Activated CD4-positive, alpha-beta memory T cell treated with anti-CD3 and anti-CD28 coated beads, Interleukin-2, amount 10 ng/mL, durations not matched to agents 7 days and 5 days (primary cell): ENCODE measurements at regions of chr2 and their contacts with region 1.

Region 1: DNA sequence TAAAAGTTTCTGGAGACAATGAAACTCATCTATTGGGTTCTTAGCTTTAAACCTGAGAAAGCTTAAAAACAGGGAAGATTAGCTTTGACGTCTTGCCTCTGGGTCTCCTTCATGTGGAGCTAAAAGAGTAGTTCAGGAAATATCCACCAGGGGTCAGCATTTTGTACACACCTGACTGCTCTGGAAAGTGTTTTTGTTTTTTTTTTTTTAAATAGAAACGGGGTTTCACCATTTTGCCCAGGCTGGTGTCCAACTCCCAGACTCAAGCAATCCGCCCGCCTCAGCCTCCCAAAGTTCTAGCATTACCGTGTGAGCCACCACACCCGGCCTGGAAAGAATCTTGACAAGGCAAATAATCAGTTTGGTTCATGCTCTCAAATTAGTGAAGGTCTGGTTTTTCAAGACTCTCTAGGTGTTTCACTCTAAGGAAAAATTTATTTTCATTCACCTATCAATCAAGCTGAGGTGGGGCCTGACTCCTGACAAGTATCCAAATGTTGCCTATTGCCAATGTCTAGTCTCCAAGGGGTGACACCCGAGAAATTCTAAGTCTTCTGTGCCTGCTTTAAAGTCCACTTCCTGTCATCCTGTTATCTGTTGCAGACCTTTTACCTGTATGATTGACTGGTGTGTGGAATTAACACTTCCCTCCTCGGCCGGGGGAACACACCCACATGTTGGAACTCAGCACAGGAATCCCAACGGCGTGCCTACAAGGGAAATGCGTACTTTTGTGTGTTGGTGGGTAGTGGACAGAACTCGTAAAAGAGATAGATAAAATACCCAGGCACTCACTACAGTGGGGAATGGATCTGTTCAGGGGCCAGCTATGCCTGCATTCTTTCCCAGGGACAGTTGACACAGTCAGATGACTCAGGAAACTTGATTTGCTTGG is 11.3 kb downstream of the IL1RN start:
- DNase-seq: peak; percentile 52
- H3K4me3 Mint-ChIP-seq: peak overlapping the region; percentile 25
- H3K27ac Mint-ChIP-seq: no peak overlapping the region
- H3K4me1 Mint-ChIP-seq: peaks cover 30% of the 10 kb centered on the region
- H3K27me3 Mint-ChIP-seq: no peaks in the 10 kb centered on the region

Region 2: DNA sequence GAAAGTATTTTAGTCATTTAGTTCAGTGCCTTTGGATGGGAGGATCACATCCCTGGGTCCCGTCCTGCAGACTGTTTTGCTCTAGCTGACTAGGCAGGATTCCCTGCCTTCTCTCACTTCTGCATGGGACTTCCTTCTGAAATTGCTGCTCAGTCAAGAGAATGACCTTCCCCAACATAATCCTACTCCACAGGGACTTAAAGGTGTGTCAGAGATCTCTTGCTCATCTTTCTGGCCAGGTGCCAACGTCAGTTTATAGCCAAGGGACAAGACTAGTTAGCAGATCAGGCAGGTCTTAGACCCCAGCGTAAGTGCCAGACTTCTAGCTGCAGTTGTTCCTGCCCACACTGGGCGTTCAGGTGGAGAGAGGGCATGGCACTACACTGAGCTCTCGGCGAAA is 292.6 kb before region 1 on chr2:
- CTCF ChIA-PET with region 1: no interaction called
- POLR2A ChIA-PET with region 1: no interaction called
- DNase-seq: no peak
- H3K4me3 Mint-ChIP-seq: no peak overlapping the region
- H3K27ac Mint-ChIP-seq: no peak overlapping the region
- H3K4me1 Mint-ChIP-seq: peaks cover 3% of the 10 kb centered on the region
- H3K27me3 Mint-ChIP-seq: peaks cover 23% of the 10 kb centered on the region

Region 3: GRCh38 chr2:112891385-112891831 is 247.3 kb before region 1 on chr2:
- CTCF ChIA-PET with region 1: no interaction called
- POLR2A ChIA-PET with region 1: no interaction called
- DNase-seq: no peak
- H3K4me3 Mint-ChIP-seq: no peak overlapping the region
- H3K27ac Mint-ChIP-seq: no peak overlapping the region
- H3K4me1 Mint-ChIP-seq: no peaks in the 10 kb centered on the region
- H3K27me3 Mint-ChIP-seq: peaks cover 4% of the 10 kb centered on the region

Region 4: DNA sequence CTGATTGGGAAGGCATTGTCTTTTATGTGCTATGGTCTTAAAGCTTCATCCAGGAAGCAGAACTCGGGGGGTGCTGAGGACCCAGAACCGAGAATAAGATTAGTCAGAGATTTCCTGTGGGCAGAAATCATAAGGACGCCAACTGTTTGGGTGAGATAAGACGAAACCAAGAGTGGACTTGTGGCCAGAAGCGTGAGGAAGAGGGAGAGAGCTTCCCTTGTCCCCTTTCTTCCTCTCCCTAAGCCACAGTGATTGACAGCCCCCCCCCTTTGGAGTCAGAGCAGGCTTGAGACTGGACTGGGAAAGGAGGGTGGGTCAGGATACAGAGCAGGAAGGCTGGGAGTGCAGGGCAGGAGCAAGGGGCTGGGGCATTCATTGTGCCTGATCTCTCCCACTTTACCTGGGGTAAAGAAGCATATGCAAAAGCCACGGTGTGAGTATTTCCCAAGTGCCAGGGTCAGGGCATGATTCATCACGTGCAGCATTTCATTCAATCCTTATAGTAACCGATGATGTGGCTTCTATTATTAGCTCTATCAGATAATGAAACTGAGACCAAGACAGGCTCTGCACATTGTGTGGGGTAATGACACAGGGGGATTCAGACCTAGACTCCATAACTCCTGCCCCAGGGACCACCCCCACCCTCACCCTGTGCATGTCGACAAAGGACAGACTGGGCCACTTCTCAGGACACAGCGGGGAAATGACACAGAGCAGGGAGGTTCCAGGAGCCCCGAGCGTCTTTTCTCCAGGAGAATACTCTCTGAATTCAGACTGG is 14.3 kb before region 1 on chr2:
- CTCF ChIA-PET with region 1: interaction called, 33 read pairs
- POLR2A ChIA-PET with region 1: no interaction called
- DNase-seq: no peak
- H3K4me3 Mint-ChIP-seq: no peak overlapping the region
- H3K27ac Mint-ChIP-seq: no peak overlapping the region
- H3K4me1 Mint-ChIP-seq: peaks cover 47% of the 10 kb centered on the region
- H3K27me3 Mint-ChIP-seq: no peaks in the 10 kb centered on the region

Region 5: DNA sequence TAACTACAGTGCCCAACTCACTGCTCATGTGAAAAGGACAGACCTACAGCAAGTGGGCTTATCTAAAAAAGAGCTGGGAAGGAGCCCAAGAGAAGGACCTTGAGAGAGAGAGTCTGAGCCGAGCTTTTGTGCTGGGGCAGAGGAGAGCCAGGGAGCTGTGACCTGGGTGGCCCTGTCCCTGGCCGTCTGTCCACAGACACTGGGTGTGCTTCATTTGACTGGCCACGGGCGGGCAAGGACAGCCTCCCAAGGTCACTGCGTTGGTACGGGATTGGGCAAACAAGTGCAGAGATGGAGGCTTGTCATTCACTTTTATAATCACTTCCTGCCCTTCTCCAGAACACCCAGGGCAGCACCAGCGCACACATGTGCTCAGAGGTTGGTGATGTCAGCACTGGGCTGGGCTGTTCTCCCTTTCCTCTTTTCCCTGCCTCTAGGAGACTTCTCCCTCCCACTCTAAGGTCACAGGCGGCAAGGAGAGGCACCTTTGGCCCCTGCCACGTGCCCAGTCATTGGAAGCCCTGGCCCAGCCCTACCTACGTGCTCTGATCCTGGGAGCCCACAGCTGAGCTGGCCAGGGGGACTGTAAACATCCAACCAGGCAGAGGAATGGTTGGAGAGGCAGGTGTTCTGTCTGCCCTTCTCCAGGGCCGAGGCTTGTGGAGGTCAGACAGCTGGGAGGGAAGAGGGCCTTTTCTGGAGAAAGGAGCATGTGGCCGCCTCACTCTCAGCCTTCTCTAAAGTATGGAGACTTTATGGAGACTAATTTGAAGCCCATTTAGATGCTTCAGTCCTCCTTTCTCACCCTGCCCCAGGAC is 28.6 kb after region 1 on chr2:
- CTCF ChIA-PET with region 1: interaction called, 136 read pairs
- POLR2A ChIA-PET with region 1: interaction called, 3 read pairs
- DNase-seq: peak; percentile 51
- H3K4me3 Mint-ChIP-seq: no peak overlapping the region
- H3K27ac Mint-ChIP-seq: peak overlapping the region; percentile 75
- H3K4me1 Mint-ChIP-seq: peaks cover 62% of the 10 kb centered on the region
- H3K27me3 Mint-ChIP-seq: no peaks in the 10 kb centered on the region

Region 6: DNA sequence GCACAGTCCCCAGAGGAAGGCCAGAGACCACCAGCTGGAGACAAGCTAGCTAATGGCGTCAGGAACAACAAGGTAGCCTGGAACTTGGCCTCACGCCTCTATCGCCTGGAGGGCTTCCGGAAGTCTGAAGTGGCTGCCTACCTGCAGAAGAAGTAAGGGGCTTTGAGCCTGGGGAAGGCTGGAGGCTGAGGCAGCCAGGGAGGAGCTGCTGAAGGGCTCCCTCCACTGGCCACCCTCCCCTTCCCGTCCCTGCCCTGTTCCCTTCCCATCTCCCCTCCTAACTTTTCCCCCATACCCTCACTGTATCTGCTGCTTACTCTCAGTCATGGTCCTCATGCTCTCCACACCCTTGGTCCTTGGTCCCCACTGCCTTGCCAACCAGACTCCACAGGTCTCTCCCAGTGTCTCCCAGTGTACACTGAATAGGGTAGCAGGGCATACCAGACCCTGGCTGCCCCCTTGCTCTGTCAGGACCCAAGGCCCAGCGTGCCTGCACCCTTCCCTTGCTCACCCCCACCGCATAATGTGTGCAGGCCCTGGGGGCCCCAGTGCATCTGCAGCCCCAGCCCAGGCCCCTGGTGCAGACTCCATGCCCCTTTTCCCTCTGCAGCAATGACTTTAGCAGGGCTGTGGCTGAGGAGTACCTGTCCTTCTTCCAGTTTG is 53.9 kb after region 1 on chr2:
- CTCF ChIA-PET with region 1: interaction called, 95 read pairs
- POLR2A ChIA-PET with region 1: interaction called, 34 read pairs
- DNase-seq: no peak
- H3K4me3 Mint-ChIP-seq: no peak overlapping the region
- H3K27ac Mint-ChIP-seq: no peak overlapping the region
- H3K4me1 Mint-ChIP-seq: peaks cover 68% of the 10 kb centered on the region
- H3K27me3 Mint-ChIP-seq: no peaks in the 10 kb centered on the region

Region 7: DNA sequence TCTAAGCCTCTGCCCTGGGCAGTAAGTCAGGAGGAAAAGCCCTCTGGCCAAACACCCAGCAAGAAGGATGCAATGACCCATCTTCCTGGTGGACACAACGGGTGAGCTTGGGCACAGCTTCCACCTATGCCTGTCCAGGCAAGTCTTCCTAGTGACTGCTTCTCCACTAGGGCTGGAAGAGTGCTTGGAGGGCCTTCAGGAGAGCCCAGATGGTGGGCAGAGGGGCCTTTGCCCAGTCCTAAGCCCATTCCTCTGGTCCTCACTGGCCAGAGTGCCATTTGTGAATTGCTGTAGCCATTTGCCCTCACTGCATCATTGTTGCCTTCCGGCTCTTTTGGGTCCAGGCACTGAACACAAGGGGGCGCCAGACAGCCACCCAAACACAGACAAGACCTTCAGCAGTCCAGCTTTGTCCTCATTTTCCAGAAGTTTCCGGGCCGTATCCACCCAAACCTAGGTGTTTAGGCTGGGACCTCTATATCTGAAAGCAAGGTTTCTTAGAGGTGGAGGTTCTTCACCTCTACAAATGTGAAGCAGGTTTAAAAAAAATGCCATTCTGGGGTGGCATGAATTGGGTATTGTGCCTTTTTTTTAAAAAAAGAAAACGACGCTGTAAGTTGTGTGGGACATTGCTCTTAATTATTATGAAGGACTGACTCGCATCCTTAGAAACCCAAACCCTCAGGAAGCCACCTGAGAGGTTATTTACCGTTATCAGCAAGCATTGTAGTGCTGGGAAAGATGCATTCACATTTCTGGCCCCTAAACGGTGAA is 110.5 kb after region 1 on chr2:
- CTCF ChIA-PET with region 1: interaction called, 10 read pairs
- POLR2A ChIA-PET with region 1: no interaction called
- DNase-seq: peak; percentile 82
- H3K4me3 Mint-ChIP-seq: no peak overlapping the region
- H3K27ac Mint-ChIP-seq: peak overlapping the region; percentile 82
- H3K4me1 Mint-ChIP-seq: peaks cover 58% of the 10 kb centered on the region
- H3K27me3 Mint-ChIP-seq: no peaks in the 10 kb centered on the region